H1 (cell line): ENCODE measurements at regions of chr9 and their contacts with region 1.

Region 1: GRCh38 chr9:18143028-18143745 is 330.8 kb upstream of the ADAMTSL1 start:
- DNase-seq: no peak
- H3K4me3 ChIP-seq: no peak overlapping the region
- H3K27ac ChIP-seq: no peak overlapping the region
- H3K4me1 ChIP-seq: no peaks in the 10 kb centered on the region
- H3K27me3 ChIP-seq: no peaks in the 10 kb centered on the region
- CTCF ChIP-seq: peak in 2 of 3 experiments; percentile 39 to 45; a peak in 3 of 4 replicates
- EP300 ChIP-seq: no peak
- POLR2A ChIP-seq: no peak
- RAD21 ChIP-seq: peak; percentile 30 to 40; a peak in 3 of 4 replicates

Region 2: DNA sequence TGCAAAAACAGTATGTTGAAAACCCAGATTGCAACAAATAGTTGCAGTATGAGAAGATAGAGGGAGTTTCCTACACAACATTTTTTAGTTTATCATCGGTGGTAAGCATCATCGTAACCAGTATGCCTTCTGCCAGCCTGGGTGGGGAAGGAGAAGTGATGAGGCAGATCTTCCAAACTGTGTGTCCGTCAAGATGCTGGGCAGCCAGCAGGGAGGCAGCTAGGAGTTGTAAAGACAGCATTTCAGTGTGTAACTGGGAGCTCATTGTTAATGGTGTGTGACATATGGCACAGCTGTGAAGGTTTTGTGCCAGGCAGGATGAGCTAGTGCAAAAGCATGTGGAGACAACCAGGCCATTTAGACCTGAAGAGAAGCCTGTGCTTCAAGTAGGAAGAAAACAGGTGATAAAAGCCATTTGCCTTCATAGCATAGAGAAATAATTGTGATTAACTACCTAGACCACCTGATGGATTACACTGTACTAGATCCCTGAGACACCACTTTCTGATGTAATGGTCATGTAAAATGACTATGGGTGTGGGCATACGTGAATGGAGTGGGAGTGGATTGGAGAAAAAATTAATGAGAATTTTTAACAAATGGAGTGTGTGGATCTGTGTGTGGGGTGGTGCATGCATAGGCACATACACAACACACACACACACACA is 16.2 kb before region 1 on chr9:
- CTCF ChIA-PET with region 1: interaction called, 31 read pairs
- POLR2A ChIA-PET with region 1: no interaction called
- DNase-seq: no peak
- H3K4me3 ChIP-seq: no peak overlapping the region
- H3K27ac ChIP-seq: no peak overlapping the region
- H3K4me1 ChIP-seq: peaks cover 0 to 5% (median 0%) of the 10 kb centered on the region in 4 experiments; a peak in 1 of 7 replicates
- H3K27me3 ChIP-seq: no peaks in the 10 kb centered on the region
- CTCF ChIP-seq: no peak
- EP300 ChIP-seq: no peak
- POLR2A ChIP-seq: no peak
- RAD21 ChIP-seq: no peak